Endothelial cell of umbilical vein (primary cell): ENCODE measurements at regions of chr5 and their contacts with region 1.

Region 1: GRCh38 chr5:93320920-93321319 is 260.1 kb downstream of the NR2F1-AS1 start:
- DNase-seq: peak; percentile 49
- H3K4me3 ChIP-seq: no peak overlapping the region
- H3K27ac ChIP-seq: no peak overlapping the region
- H3K4me1 ChIP-seq: no peaks in the 10 kb centered on the region
- H3K27me3 ChIP-seq: no peaks in the 10 kb centered on the region
- CTCF ChIP-seq: no peak
- POLR2A ChIP-seq: no peak

Region 2: DNA sequence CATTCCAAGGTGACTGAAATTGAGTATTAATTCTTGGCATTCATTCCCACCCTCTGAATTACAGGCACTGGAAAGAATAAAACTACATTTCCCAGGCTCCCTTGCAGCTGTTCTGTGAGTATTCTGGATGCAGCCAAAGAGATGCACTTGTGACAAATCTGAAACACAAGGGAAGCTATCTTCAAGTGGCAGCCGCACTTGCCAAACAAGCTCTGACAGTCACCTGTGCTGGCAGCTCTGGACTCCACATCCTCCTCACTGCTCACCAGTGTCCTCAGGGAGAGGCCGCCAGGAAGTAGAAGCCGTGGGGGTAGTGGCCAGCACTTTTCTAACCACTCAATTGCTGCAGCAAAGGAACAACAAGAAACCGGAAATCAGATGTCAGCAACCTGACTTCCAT is 14.9 kb before region 1 on chr5:
- CTCF ChIA-PET with region 1: no interaction called
- POLR2A ChIA-PET with region 1: no interaction called
- dilution Hi-C with region 1: no loop called
- intact Hi-C with region 1: loop called (anchors 2 kb)
- DNase-seq: no peak
- H3K4me3 ChIP-seq: no peak overlapping the region
- H3K27ac ChIP-seq: no peak overlapping the region
- H3K4me1 ChIP-seq: peaks cover 8% of the 10 kb centered on the region
- H3K27me3 ChIP-seq: no peaks in the 10 kb centered on the region
- CTCF ChIP-seq: no peak
- POLR2A ChIP-seq: no peak